ENCODE measurements at regions of chr2 and their contacts with region 1.

Region 1: GRCh38 chr2:120470041-120470965 is 124.4 kb downstream of the INHBB start:
- DNase-seq: peak; percentile 94
- H3K4me3 Mint-ChIP-seq: no peak overlapping the region
- H3K27ac Mint-ChIP-seq: peak overlapping the region; percentile 92
- H3K4me1 Mint-ChIP-seq: peaks cover 46% of the 10 kb centered on the region
- H3K27me3 Mint-ChIP-seq: no peaks in the 10 kb centered on the region
- CTCF ChIP-seq: no peak

Region 2: DNA sequence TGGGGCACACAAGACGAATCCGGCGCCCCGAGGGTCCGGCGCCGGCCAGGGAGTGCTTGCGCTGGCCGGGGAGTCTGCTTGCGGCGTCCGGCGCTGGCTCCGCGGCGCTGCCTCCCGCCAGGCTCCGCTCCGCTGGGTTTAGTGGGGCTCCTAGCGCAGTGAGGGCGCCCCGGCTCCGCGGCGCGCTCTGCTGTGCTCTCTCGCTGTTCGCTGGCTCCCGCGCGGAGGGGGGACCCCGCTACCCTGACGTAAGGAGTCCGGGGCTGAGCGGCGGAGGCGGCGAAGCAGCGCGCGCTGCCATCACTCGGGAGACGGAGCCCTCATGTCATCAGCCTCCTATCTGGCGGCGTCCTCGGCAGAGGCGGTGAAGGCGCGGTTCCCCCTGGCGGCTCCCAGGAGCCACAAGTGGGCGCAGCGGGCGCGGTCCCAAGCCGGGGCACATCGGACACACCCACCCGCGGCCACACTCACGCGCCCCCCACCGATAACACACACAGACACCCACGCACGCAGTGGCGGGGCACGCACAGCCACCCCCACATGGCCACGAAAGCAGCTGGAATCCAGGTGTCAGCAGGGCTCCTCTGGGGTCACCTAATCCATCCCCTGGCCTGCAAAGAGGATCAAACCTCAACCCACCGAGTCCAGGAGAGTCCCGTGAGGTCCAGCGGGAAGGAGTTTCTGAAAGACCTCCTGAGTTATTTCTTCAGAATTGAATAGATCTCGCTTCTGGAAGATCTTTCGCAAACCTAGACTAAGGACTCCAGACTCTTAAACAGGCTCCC is 1311.5 kb before region 1 on chr2 and contains the start of gene C1QL2:
- CTCF ChIA-PET with region 1: no interaction called
- POLR2A ChIA-PET with region 1: no interaction called
- intact Hi-C with region 1: no loop called
- DNase-seq: no peak
- H3K4me3 Mint-ChIP-seq: no peak within 1 kb of the TSS
- H3K27ac Mint-ChIP-seq: no peak within 1 kb of the TSS
- H3K4me1 Mint-ChIP-seq: no peaks in the 10 kb centered on the region
- H3K27me3 Mint-ChIP-seq: peaks cover 59% of the 10 kb centered on the region
- CTCF ChIP-seq: no peak
- total RNA-seq, gene C1QL2: not detected in 2 replicates

Region 3: GRCh38 chr2:119608553-119608952 is 861.8 kb before region 1 on chr2:
- CTCF ChIA-PET with region 1: no interaction called
- POLR2A ChIA-PET with region 1: no interaction called
- intact Hi-C with region 1: no loop called
- DNase-seq: no peak
- H3K4me3 Mint-ChIP-seq: no peak overlapping the region
- H3K27ac Mint-ChIP-seq: no peak overlapping the region
- H3K4me1 Mint-ChIP-seq: no peaks in the 10 kb centered on the region
- H3K27me3 Mint-ChIP-seq: peaks cover 30% of the 10 kb centered on the region
- CTCF ChIP-seq: no peak

Region 4: DNA sequence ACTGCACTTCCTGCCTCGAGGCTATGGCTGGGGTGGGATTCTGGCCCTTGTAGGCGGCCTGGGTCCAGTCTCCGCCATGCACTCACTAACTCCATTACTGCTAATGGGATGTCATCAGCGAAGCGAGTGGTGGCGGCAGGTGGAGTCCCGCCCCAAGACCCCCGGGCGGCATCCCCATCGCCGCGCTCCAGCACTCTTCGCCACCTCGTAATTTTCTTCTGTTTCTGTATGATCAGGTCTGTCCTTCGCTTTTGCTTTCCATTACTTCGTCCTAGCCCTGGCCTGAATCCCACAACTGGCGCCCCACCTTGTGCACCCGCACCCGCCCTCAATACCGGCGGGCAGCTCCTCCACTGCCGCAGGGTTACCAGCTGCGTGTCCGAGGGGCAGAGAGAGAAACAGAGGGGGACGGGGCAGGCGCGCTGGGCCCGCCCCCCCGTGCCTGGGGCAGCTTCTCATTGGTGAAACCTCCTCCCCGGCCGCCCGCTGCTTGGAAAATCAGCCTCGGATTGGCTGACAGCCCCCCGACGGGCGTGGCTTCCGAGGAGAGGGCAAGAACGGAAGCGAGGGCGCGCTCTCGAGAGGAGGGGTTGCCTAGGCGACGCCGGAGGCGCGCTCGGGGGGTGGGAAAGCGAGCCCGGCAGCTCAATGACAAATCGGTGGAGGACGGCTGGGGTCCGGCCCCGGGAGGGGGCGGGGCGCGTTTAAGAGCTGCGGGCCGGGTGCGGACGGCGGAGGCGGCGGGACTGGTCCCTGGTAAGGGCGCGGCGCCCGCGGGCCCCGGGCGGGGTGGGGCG is 217.9 kb before region 1 on chr2 and contains the start of gene RALB:
- CTCF ChIA-PET with region 1: no interaction called
- POLR2A ChIA-PET with region 1: no interaction called
- intact Hi-C with region 1: loop called (anchors 2 kb)
- DNase-seq: peak; percentile 98
- H3K4me3 Mint-ChIP-seq: peak within 1 kb of the TSS; percentile 96
- H3K27ac Mint-ChIP-seq: peak within 1 kb of the TSS; percentile 88
- H3K4me1 Mint-ChIP-seq: peaks cover 38% of the 10 kb centered on the region
- H3K27me3 Mint-ChIP-seq: peaks cover 29% of the 10 kb centered on the region
- CTCF ChIP-seq: no peak
- total RNA-seq, gene RALB: 37.4 and 46.5 TPM in 2 replicates

Region 5: DNA sequence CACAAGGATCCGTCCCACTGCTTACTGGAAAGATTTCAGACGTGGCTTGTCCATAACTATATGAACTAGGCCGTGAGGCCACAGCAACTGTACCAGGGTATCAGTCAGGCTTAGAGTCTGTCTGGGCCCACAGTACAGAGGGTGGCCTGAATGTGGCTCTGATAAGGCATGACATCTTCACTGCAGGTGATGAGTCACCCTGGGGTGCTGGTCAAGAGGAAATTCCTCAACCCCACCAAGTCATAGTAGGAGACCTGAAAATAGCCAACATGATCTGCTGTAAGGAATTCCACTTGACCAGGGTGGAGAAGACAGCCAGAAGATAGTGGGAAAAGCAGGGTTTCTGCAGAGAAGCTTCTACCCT is 16.7 kb before region 1 on chr2:
- CTCF ChIA-PET with region 1: no interaction called
- POLR2A ChIA-PET with region 1: no interaction called
- intact Hi-C with region 1: no loop called
- DNase-seq: no peak
- H3K4me3 Mint-ChIP-seq: no peak overlapping the region
- H3K27ac Mint-ChIP-seq: no peak overlapping the region
- H3K4me1 Mint-ChIP-seq: peaks cover 15% of the 10 kb centered on the region
- H3K27me3 Mint-ChIP-seq: no peaks in the 10 kb centered on the region
- CTCF ChIP-seq: no peak

Region 6: GRCh38 chr2:120520929-120521912 is 50.9 kb after region 1 on chr2:
- CTCF ChIA-PET with region 1: no interaction called
- POLR2A ChIA-PET with region 1: no interaction called
- intact Hi-C with region 1: loop called (anchors 2 kb)
- DNase-seq: peak; percentile 68
- H3K4me3 Mint-ChIP-seq: no peak overlapping the region
- H3K27ac Mint-ChIP-seq: no peak overlapping the region
- H3K4me1 Mint-ChIP-seq: peaks cover 8% of the 10 kb centered on the region
- H3K27me3 Mint-ChIP-seq: peaks cover 9% of the 10 kb centered on the region
- CTCF ChIP-seq: peak; percentile 93

Region 7: DNA sequence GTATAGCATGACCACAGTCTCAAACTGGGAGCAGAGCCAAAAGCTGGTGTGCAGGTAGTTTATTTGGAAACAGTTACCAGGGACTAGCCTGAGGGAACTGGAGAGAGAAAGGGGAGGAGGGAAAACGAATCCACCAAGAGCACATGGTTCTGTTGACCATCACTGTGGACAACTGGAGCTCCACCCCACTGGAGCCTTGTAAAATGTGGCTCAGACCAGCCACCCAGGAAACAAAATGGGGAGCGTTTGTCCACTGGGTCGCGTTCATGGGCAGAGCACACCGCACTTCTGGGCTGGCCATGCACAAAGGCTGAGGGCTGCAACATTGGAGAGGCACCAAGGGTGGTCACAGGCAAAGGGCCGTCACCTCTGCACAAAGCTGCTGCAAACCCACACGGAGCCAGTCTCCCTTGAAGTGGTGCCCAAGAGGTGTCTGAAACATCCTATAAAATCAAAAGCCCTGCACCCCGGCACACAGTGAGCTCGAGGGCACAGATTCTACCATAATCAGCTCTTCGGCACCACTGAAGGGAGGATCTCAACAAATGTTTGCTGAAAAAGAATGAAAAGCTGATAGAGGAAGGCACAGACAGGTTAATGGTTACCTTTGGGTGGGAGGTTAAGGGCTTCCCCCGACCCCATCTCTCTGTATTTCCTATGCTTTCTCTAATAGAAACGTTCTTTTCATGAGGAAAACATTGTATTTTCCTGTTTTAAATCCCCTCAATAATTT is 68.6 kb after region 1 on chr2:
- CTCF ChIA-PET with region 1: no interaction called
- POLR2A ChIA-PET with region 1: interaction called, 14 read pairs
- intact Hi-C with region 1: no loop called
- DNase-seq: peak; percentile 85
- H3K4me3 Mint-ChIP-seq: no peak overlapping the region
- H3K27ac Mint-ChIP-seq: no peak overlapping the region
- H3K4me1 Mint-ChIP-seq: peaks cover 35% of the 10 kb centered on the region
- H3K27me3 Mint-ChIP-seq: no peaks in the 10 kb centered on the region
- CTCF ChIP-seq: no peak

Region 8: DNA sequence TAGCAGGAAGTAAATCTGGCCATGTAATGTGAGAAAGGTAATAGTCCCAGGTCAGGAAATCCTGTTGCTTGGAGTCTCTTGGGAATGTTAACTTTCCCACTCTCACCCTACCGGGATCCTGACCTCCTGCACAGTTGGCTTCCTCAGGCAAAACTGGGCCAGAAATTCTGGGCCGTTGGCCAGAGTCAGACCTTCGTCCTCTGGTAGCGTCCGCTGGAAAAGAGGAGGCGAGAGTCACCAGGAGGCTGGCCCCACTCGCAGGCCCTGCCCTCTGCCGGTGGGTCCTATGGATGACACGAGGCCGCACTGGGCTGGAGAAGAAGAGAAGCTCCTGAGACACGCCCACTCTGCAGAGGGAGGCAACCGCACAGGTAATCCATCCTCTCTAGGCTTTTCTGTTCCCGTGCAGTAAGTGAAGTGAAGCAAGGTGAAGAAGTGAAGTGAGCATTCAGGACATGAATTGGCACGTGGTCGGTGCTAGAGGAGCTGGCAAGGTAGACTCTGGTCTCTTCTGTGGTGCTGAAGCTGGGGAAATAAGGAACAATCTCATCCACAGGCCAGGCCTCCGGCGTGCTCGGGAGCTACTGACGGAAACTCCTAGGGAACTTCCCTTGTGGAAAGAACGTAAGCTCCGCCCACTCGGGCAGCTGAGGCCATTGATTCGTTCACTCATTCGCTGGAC is 82.6 kb after region 1 on chr2:
- CTCF ChIA-PET with region 1: interaction called, 5 read pairs
- POLR2A ChIA-PET with region 1: interaction called, 3 read pairs
- intact Hi-C with region 1: loop called (anchors 1 kb)
- DNase-seq: peak; percentile 94
- H3K4me3 Mint-ChIP-seq: no peak overlapping the region
- H3K27ac Mint-ChIP-seq: no peak overlapping the region
- H3K4me1 Mint-ChIP-seq: peaks cover 6% of the 10 kb centered on the region
- H3K27me3 Mint-ChIP-seq: no peaks in the 10 kb centered on the region
- CTCF ChIP-seq: peak; percentile 81

Region 9: GRCh38 chr2:120620025-120620793 is 149.9 kb after region 1 on chr2:
- CTCF ChIA-PET with region 1: interaction called, 3 read pairs
- POLR2A ChIA-PET with region 1: interaction called, 11 read pairs
- intact Hi-C with region 1: no loop called
- DNase-seq: peak; percentile 68
- H3K4me3 Mint-ChIP-seq: no peak overlapping the region
- H3K27ac Mint-ChIP-seq: peak overlapping the region; percentile 93
- H3K4me1 Mint-ChIP-seq: peaks cover 22% of the 10 kb centered on the region
- H3K27me3 Mint-ChIP-seq: no peaks in the 10 kb centered on the region
- CTCF ChIP-seq: no peak

Measured in MCF 10A (cell line).